ENCODE measurements at regions of chr1 and their contacts with region 1.

Region 1: DNA sequence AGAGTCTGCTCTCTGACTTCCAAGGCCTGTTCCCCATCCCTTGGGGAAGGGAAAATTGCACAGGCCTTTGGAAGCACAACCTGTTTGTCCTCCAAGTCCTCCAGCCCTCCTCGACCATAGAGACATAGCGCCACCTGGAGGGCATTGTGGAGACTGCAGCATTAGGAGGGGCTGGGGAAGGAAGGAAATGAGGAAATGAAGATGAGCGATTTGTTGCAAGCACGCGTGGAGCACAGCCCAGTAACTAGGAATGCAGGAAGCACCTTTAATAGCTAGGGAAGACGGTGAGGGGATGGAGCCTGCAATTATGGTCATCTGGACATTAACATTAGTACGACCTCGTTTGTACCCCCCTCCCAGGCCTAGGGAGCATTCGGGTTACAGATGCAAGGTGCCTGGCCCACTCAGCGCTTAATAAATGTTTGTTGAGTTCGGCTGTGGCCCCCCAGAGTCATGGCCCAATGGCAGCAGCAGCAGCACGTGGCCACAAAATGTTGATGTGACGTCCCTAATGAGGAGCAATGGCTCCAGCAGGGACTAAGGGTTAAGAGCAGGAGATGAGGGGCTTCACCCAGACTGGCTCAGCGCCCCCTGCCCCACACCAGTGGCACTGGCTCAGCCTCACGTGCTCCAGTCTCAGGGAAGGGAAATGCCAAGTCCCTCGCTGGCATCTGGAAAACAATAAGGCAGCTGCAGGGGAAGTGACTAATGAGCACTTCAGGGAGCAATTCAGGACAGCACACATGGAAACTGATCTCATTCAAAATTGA is 8.0 kb upstream of the CAMK2N1 start:
- DNase-seq: peak; percentile 89 to 94
- H3K4me3 ChIP-seq: no peak overlapping the region
- H3K27ac ChIP-seq: peak overlapping the region in 2 of 5 donors; percentile 3 to 40
- H3K4me1 ChIP-seq: peaks cover 8 to 30% (median 9%) of the 10 kb centered on the region in 4 donors
- H3K27me3 ChIP-seq: peaks cover 0 to 1% (median 0%) of the 10 kb centered on the region in 3 donors
- CTCF ChIP-seq: peak in 6 of 7 experiments; percentile 93 to 99 (median 98)
- EP300 ChIP-seq: no peak
- POLR2A ChIP-seq: no peak

Region 2: GRCh38 chr1:19918057-19918456 is 576.0 kb before region 1 on chr1:
- intact Hi-C with region 1: loop called (anchors 10 kb)
- DNase-seq: peak; percentile 85 to 93
- H3K4me3 ChIP-seq: no peak overlapping the region
- H3K27ac ChIP-seq: no peak overlapping the region
- H3K4me1 ChIP-seq: peaks cover 0 to 5% (median 2%) of the 10 kb centered on the region in 4 donors
- H3K27me3 ChIP-seq: peaks cover 0 to 6% (median 0%) of the 10 kb centered on the region in 3 donors
- CTCF ChIP-seq: peak in 6 of 7 experiments; percentile 26 to 91 (median 83)
- EP300 ChIP-seq: no peak
- POLR2A ChIP-seq: no peak

Region 3: DNA sequence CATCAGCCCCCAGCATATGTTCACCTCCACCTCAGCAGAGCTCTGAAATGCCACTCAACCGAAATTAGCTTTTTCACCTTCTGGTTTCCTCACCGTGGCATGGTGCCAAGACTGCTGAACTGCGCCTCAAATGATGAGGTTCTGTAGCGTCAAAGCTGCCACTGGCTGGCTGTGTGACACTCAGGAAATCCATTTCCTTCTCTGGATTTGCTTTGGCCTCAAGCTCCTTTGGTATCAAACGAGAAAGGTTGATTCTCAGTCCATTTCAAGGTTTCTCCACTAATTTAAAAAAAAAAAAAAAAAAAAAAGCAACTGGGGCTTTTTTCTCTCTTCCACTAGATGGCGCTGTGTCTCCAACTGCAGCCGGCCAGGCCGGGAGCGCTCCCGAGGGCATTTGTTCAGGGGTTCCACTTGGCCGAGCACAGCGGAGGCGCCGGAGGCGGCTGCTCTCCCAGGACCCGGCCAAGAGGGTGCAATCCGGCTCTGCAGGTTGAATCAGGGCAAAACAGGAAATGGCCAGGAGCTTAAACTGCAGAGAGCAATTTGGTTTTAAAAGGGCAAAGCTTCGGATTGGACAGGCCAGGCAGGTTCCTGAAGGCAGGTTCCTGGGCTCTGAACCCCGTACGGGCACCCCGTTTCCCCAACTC is 281.2 kb before region 1 on chr1:
- intact Hi-C with region 1: loop called (anchors 5 kb)
- DNase-seq: peak; percentile 70 to 83
- H3K4me3 ChIP-seq: no peak overlapping the region
- H3K27ac ChIP-seq: no peak overlapping the region
- H3K4me1 ChIP-seq: peaks cover 0 to 14% (median 10%) of the 10 kb centered on the region in 4 donors
- H3K27me3 ChIP-seq: peaks cover 0 to 75% (median 25%) of the 10 kb centered on the region in 3 donors
- CTCF ChIP-seq: peak in 5 of 7 experiments; percentile 29 to 81 (median 74)
- EP300 ChIP-seq: no peak
- POLR2A ChIP-seq: no peak

Region 4: GRCh38 chr1:20376880-20377494 is 117.0 kb before region 1 on chr1:
- intact Hi-C with region 1: loop called (anchors 5 kb)
- DNase-seq: peak; percentile 37 to 72
- H3K4me3 ChIP-seq: no peak overlapping the region
- H3K27ac ChIP-seq: no peak overlapping the region
- H3K4me1 ChIP-seq: no peaks in the 10 kb centered on the region
- H3K27me3 ChIP-seq: peaks cover 0 to 92% (median 19%) of the 10 kb centered on the region in 3 donors
- CTCF ChIP-seq: peak in 5 of 7 experiments; percentile 41 to 77 (median 69)
- EP300 ChIP-seq: no peak
- POLR2A ChIP-seq: no peak

Region 5: DNA sequence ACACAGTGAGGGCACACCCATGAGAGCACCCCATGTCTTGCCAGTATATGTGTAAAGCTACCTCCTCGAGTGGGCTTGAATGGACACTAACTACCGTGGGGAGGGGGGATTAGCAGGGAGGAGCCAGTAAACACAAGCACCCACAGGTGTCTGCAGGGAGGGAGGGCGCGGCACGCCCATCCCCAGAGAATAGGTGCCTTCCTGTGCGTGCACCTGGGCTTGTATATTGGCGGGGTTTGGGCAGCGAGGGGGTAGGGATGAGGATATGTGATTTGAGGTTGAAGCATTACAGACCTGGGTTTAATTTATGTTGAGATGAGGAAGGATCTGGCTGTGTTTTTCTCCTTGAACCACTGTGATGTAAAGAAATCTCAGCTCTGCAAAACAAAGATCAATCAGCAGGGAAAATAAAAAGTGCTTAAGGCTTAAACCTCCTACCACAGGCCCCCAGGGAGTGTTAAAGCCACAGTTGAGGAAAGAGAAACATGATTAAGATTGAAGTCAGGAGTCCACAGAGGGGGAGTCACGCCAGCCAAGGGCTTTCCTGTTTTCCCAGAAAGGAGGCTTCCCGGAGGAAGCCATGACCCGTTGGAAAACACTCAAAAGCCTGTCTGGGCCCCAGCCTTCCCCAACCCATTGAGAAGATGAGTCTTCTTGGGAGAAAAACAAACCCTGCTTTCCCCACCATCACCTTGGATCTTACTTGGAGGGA is 88.0 kb before region 1 on chr1:
- intact Hi-C with region 1: no loop called
- DNase-seq: peak in 1 of 2 donors; percentile 23
- H3K4me3 ChIP-seq: no peak overlapping the region
- H3K27ac ChIP-seq: no peak overlapping the region
- H3K4me1 ChIP-seq: no peaks in the 10 kb centered on the region
- H3K27me3 ChIP-seq: peaks cover 0 to 60% (median 36%) of the 10 kb centered on the region in 3 donors
- CTCF ChIP-seq: no peak
- EP300 ChIP-seq: no peak
- POLR2A ChIP-seq: no peak

Measured in stomach (tissue), 19 donors.